AG04450 (cell line): ENCODE measurements at regions of chr3 and their contacts with region 1.

Region 1: GRCh38 chr3:107660306-107660976 is 137.7 kb downstream of the BBX start:
- DNase-seq: no peak
- H3K4me3 ChIP-seq: no peak overlapping the region
- H3K27ac ChIP-seq: no peak overlapping the region
- H3K27me3 ChIP-seq: no peaks in the 10 kb centered on the region
- CTCF ChIP-seq: peak; percentile 66

Region 2: DNA sequence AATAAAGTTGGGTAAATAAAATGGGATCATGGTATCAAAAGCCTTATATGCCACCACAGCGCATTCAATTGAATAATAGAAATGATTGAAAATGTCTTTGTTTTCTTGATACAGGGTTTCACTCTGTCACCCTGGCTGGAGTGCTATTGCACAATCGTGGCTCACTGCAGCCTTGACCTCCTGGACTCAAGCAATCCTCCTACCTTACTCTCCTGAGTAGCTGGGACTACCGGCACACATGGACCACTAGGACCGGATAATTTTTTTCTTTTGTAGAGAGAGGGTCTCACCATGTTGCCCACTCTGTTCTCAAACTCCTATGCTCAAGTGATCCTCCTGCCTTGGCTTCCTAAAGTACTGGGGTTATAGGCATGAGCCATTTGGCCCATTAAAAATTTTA is 171.5 kb before region 1 on chr3:
- CTCF ChIA-PET with region 1: no interaction called
- POLR2A ChIA-PET with region 1: no interaction called
- DNase-seq: no peak
- H3K4me3 ChIP-seq: no peak overlapping the region
- H3K27ac ChIP-seq: no peak overlapping the region
- H3K27me3 ChIP-seq: no peaks in the 10 kb centered on the region
- CTCF ChIP-seq: no peak

Region 3: DNA sequence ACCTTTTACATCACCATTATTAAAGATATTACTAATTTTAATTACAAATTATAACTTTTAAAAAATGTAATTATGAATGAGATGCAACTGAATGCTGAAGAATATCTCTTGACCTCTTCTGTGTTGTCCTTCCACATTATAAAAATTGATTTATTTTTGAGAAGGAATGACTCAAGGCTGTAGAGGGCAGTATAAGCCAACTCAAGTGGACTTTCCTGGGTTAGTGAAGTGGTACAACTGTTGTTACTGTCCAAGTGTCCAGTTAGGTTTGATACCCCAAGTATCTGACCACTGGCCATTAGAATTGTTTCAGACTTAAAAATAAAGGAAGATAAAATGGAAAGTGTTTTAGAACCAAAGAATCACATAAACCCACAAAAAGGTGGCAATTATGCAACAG is 85.8 kb before region 1 on chr3:
- CTCF ChIA-PET with region 1: interaction called, 22 read pairs
- POLR2A ChIA-PET with region 1: no interaction called
- DNase-seq: peak; percentile 18
- H3K4me3 ChIP-seq: no peak overlapping the region
- H3K27ac ChIP-seq: no peak overlapping the region
- H3K27me3 ChIP-seq: no peaks in the 10 kb centered on the region
- CTCF ChIP-seq: peak; percentile 67

Region 4: GRCh38 chr3:107670986-107671385 is 10.5 kb after region 1 on chr3:
- CTCF ChIA-PET with region 1: interaction called, 149 read pairs
- POLR2A ChIA-PET with region 1: interaction called, 3 read pairs
- DNase-seq: no peak
- H3K4me3 ChIP-seq: no peak overlapping the region
- H3K27ac ChIP-seq: no peak overlapping the region
- H3K27me3 ChIP-seq: no peaks in the 10 kb centered on the region
- CTCF ChIP-seq: no peak

Region 5: GRCh38 chr3:107729686-107730085 is 69.2 kb after region 1 on chr3:
- CTCF ChIA-PET with region 1: interaction called, 10 read pairs
- POLR2A ChIA-PET with region 1: no interaction called
- DNase-seq: no peak
- H3K4me3 ChIP-seq: no peak overlapping the region
- H3K27ac ChIP-seq: no peak overlapping the region
- H3K27me3 ChIP-seq: no peaks in the 10 kb centered on the region
- CTCF ChIP-seq: no peak

Region 6: GRCh38 chr3:107846279-107846852 is 185.9 kb after region 1 on chr3:
- CTCF ChIA-PET with region 1: interaction called, 31 read pairs
- POLR2A ChIA-PET with region 1: no interaction called
- DNase-seq: peak; percentile 21
- H3K4me3 ChIP-seq: no peak overlapping the region
- H3K27ac ChIP-seq: no peak overlapping the region
- H3K27me3 ChIP-seq: peaks cover 6% of the 10 kb centered on the region
- CTCF ChIP-seq: peak; percentile 72